ENCODE measurements at regions of chr2 and their contacts with region 1.

Region 1: DNA sequence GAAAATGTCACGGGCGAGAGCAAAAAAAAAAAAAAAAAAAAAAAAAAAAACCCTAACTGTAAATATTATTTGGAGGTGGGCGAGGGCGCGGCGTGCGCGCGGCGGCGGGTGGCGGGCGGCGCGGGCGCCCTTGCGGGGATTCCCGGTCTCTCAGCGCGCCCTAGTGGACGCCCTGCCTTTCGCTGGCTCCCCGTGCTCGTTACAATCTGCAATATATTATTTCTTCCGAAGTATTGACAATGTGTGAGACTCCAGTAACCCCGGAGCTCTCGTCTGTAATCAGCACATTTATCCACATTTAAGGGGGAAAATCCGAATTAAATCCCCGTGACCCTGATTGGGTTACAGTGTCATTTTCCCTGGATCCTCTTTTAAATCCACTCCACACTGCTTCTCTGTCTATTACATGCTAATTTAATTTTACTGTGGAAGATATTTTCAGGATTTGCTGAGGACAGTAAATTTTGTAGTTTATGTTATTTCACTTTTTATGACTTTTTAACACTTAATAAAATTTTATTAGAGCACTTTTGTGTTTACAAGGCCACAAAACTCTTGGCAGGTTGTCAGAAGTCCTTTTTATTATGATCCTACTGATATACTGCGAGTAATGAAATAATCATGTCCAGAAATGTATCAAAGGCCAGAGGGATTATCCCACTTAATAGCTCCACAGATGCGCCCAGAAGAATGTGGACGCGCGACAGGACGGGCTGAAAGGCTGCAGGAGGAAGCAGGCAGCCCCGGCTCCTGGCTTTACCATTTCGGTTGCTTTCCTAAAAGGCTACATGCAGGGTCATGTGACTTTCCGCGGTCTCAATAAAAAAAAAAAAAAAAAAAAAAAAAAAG is 369.1 kb downstream of the MTX2 start:
- DNase-seq: peak; percentile 24
- ATAC-seq: peak; percentile 79
- H3K4me3 Mint-ChIP-seq: peak overlapping the region; percentile 66
- H3K27ac Mint-ChIP-seq: no peak overlapping the region
- H3K4me1 Mint-ChIP-seq: peaks cover 3% of the 10 kb centered on the region
- H3K27me3 Mint-ChIP-seq: peaks cover 45% of the 10 kb centered on the region
- CTCF ChIP-seq: peak; percentile 64

Region 2: GRCh38 chr2:175251425-175252041 is 1386.9 kb before region 1 on chr2:
- CTCF ChIA-PET with region 1: no interaction called
- POLR2A ChIA-PET with region 1: no interaction called
- intact Hi-C with region 1: loop called (anchors 5 kb)
- DNase-seq: no peak
- ATAC-seq: no peak
- H3K4me3 Mint-ChIP-seq: no peak overlapping the region
- H3K27ac Mint-ChIP-seq: no peak overlapping the region
- H3K4me1 Mint-ChIP-seq: no peaks in the 10 kb centered on the region
- H3K27me3 Mint-ChIP-seq: peaks cover 17% of the 10 kb centered on the region
- CTCF ChIP-seq: peak; percentile 51

Region 3: DNA sequence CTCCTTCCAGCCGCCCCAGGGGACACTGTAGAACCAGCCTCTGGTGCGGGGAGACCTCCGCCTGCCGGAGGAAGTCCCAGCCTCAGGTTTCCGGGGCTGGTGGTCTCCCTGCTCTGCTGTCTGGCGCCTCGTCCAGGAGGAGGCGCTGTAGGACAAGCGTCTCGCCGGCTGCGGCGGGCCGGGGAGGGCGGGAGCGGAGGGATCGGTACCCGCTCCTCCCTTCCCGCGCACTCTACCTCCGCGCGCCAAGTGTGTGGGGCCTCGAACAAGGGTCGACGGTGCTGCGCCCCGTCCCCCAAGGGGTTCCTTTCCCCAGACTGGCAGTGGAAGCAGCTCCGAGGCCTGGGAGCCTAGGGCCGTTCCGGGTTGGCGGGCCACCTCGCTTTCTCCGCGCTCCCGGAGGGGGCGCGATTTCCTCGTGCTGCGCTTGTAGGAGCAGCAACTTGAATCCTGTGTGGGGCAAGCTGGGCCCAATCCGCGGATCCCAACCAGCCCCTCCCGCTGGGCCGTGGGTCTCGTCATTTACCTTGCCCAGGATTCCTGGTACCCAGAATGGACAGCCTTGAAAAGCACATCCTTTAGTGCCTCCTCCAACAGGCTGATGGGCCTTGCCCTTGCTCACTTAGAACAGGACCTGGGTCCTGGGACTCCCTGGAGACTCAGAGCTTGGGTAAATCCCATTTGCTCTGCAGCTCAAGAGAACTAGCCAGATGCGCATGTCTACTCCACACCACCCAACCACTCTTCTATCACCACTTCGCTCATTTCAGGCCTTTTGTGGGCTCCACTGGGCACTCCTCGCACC is 497.7 kb before region 1 on chr2:
- CTCF ChIA-PET with region 1: no interaction called
- POLR2A ChIA-PET with region 1: no interaction called
- intact Hi-C with region 1: loop called (anchors 1 kb)
- DNase-seq: peak; percentile 39
- ATAC-seq: peak; percentile 73
- H3K4me3 Mint-ChIP-seq: peak overlapping the region; percentile 28
- H3K27ac Mint-ChIP-seq: no peak overlapping the region
- H3K4me1 Mint-ChIP-seq: peaks cover 17% of the 10 kb centered on the region
- H3K27me3 Mint-ChIP-seq: peaks cover 74% of the 10 kb centered on the region
- CTCF ChIP-seq: no peak

Measured in activated B cell treated with CpG ODN at 0.5 μM for 24 hours (primary cell).